ENCODE measurements at regions of chr1 and their contacts with region 1.

Region 1: DNA sequence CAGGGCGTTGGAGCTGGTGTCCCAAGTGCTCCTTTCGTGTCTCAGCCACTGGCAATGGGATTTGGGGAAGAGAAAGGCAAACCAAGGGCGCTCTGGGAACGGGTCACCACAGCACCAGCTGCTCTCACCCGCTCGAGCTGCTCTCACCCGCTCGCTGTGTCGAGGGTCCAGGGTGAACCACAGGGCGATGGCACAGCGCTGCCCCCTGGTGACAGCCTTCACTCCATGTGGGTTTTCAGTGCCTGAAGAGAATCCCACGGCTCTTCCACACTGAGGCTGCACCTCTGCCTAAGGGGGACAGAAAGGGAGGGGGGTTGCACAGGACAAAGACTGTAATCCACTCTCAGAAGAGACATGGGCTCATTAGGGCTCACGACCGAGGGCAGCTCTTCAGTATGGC is 7.1 kb upstream of the CLDN19 start:
- DNase-seq: no peak
- H3K4me3 ChIP-seq: no peak overlapping the region
- CTCF ChIP-seq: peak; percentile 64

Region 2: DNA sequence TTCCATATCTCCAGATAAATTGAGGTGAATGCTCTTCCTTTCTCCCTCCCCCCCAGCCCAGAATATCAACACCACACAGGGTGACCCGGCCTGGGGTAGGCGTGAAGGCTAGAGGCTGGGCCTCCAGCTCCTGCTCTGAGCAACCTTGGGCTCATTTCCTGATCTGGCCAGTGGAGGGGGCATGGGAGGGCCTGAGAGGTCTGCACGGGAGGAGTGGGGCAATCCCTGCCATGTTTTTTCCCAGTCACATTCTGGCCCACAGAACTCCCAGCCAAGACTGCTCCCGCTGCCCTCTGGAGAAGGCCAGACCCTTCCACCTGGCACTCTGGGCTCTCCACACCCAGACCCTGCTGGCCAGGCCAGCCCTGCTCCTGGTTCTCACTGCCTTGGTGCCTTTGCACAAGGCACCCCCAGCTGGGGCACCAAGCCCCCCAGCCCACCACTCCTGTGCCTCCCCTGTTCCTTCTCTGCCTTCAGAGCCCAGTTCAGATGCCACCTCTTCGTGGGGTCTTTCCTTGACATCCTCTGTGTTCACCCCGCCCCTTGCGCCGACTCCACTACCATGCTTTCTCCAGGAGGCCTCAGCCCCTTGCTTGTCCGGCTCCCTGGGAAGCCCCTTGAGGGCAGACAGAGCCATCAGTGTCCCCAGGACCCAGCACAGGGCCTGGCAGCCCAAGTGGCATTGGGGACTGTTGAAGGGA is 10.8 kb before region 1 on chr1:
- CTCF ChIA-PET with region 1: interaction called, 30 read pairs
- POLR2A ChIA-PET with region 1: no interaction called
- DNase-seq: no peak
- H3K4me3 ChIP-seq: no peak overlapping the region
- CTCF ChIP-seq: peak; percentile 54

Region 3: GRCh38 chr1:42756956-42757891 is 10.1 kb after region 1 on chr1:
- CTCF ChIA-PET with region 1: interaction called, 34 read pairs
- POLR2A ChIA-PET with region 1: no interaction called
- DNase-seq: no peak
- H3K4me3 ChIP-seq: no peak overlapping the region
- CTCF ChIP-seq: peak; percentile 68

Region 4: GRCh38 chr1:42766741-42767509 is 19.8 kb after region 1 on chr1 and contains the starts of genes C1orf50 and P3H1:
- CTCF ChIA-PET with region 1: interaction called, 15 read pairs
- POLR2A ChIA-PET with region 1: interaction called, 4 read pairs
- DNase-seq: peak; percentile 89
- H3K4me3 ChIP-seq: peak within 1 kb of the TSS; percentile 100
- CTCF ChIP-seq: no peak

Region 5: GRCh38 chr1:42777852-42778251 is 30.7 kb after region 1 on chr1:
- CTCF ChIA-PET with region 1: no interaction called
- POLR2A ChIA-PET with region 1: no interaction called
- DNase-seq: no peak
- H3K4me3 ChIP-seq: no peak overlapping the region
- CTCF ChIP-seq: peak; percentile 68

Region 6: GRCh38 chr1:42886800-42887199 is 139.7 kb after region 1 on chr1:
- CTCF ChIA-PET with region 1: no interaction called
- POLR2A ChIA-PET with region 1: no interaction called
- DNase-seq: no peak
- H3K4me3 ChIP-seq: no peak overlapping the region
- CTCF ChIP-seq: no peak